Activated CD4-positive, alpha-beta T cell treated with anti-CD3 and anti-CD28 coated beads for 36 hours (primary cell): ENCODE measurements at regions of chr10 and their contacts with region 1.

Region 1: GRCh38 chr10:90893190-90893589 is 21.4 kb downstream of the RPP30 start:
- DNase-seq: no peak
- ATAC-seq: no peak
- H3K4me3 Mint-ChIP-seq: no peak overlapping the region
- H3K27ac Mint-ChIP-seq: no peak overlapping the region
- H3K4me1 Mint-ChIP-seq: peaks cover 14% of the 10 kb centered on the region
- H3K27me3 Mint-ChIP-seq: no peaks in the 10 kb centered on the region

Region 2: GRCh38 chr10:90879062-90879461 is 14.1 kb before region 1 on chr10:
- CTCF ChIA-PET with region 1: interaction called, 28 read pairs
- POLR2A ChIA-PET with region 1: no interaction called
- intact Hi-C with region 1: no loop called
- DNase-seq: no peak
- ATAC-seq: peak; percentile 30
- H3K4me3 Mint-ChIP-seq: no peak overlapping the region
- H3K27ac Mint-ChIP-seq: peak overlapping the region; percentile 24
- H3K4me1 Mint-ChIP-seq: peaks cover 11% of the 10 kb centered on the region
- H3K27me3 Mint-ChIP-seq: no peaks in the 10 kb centered on the region

Region 3: GRCh38 chr10:90912174-90912573 is 19.0 kb after region 1 on chr10:
- CTCF ChIA-PET with region 1: interaction called, 16 read pairs
- POLR2A ChIA-PET with region 1: no interaction called
- intact Hi-C with region 1: no loop called
- DNase-seq: no peak
- ATAC-seq: no peak
- H3K4me3 Mint-ChIP-seq: no peak overlapping the region
- H3K27ac Mint-ChIP-seq: no peak overlapping the region
- H3K4me1 Mint-ChIP-seq: peaks cover 2% of the 10 kb centered on the region
- H3K27me3 Mint-ChIP-seq: no peaks in the 10 kb centered on the region